Right cardiac atrium (tissue), 5 donors: ENCODE measurements at regions of chr16 and their contacts with region 1.

Region 1: GRCh38 chr16:7456211-7456610 is 123.6 kb downstream of the RBFOX1 start:
- DNase-seq: no peak
- ATAC-seq: no peak
- H3K4me3 ChIP-seq: no peak overlapping the region
- H3K27ac ChIP-seq: no peak overlapping the region
- H3K4me1 ChIP-seq: no peaks in the 10 kb centered on the region
- H3K27me3 ChIP-seq: no peaks in the 10 kb centered on the region

Region 2: DNA sequence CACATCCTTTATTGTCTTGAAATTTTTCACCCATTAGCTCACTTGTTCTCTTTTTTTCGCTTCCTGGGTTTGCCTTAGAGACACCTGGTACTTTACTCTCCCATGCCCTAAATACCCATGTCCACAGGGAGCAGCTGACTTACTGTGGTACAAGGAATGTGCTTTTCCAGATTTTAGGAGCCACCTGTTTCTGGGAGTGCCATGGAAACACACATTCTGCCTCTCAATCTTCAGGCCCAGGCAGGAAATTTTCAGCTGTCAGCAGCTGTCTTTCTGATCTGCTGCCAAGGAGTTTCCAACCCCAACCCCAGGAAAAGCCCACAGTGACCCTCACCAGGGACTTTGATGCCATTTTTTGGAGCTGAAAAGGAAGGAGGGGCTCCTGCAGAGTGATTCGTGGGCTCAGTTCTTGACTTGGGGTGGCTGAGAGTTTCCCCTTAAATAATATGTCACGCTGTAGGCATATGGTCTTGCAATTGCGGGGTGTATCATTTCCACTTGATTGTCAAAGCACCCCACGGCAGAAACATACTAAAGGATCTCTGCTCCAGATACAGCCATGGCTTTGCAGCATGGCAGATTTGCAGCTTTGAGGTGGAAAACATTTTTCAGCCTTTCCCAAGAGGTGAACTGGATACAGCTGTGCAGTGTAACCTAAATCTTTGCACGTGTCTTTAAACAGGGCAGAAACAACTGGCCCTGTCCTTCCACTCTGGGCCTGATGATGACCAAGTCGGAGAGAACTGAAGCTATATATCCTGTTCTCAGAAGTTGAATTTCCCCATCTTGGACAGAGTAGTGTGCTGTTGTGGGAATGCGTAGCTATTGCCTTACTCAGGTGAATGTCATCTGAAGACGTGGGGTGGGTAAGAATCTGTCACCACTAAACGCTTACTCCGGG is 104.4 kb before region 1 on chr16:
- intact Hi-C with region 1: no loop called
- DNase-seq: no peak
- ATAC-seq: no peak
- H3K4me3 ChIP-seq: no peak overlapping the region
- H3K27ac ChIP-seq: no peak overlapping the region
- H3K4me1 ChIP-seq: peaks cover 8% of the 10 kb centered on the region
- H3K27me3 ChIP-seq: no peaks in the 10 kb centered on the region

Region 3: GRCh38 chr16:7363422-7364417 is 92.5 kb before region 1 on chr16:
- intact Hi-C with region 1: no loop called
- DNase-seq: peak; percentile 33 to 64 (median 49)
- ATAC-seq: peak; percentile 33 to 38
- H3K4me3 ChIP-seq: no peak overlapping the region
- H3K27ac ChIP-seq: peak overlapping the region; percentile 70
- H3K4me1 ChIP-seq: peaks cover 5% of the 10 kb centered on the region
- H3K27me3 ChIP-seq: no peaks in the 10 kb centered on the region

Region 4: DNA sequence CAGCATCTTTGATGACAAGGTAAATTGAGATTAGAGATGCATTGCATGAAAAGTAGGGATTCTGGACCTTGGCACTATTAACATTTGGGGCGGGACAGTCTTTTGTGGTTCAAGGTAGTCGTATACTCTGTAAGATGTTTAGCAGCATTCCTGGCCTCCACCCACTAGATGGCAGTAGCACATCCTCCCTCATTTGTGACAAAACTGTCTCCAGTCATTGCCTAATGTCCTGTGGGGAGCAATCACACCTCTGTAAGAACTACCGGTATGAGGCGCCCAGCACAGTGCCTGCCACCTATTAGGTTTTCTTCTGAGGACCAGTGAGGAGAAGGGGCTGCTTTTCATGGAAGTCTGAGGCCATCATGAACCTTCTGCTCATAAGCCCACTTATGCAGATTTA is 57.2 kb after region 1 on chr16:
- intact Hi-C with region 1: loop called in 1 of 4 experiments (anchors 10 kb)
- DNase-seq: no peak
- ATAC-seq: no peak
- H3K4me3 ChIP-seq: no peak overlapping the region
- H3K27ac ChIP-seq: no peak overlapping the region
- H3K4me1 ChIP-seq: no peaks in the 10 kb centered on the region
- H3K27me3 ChIP-seq: no peaks in the 10 kb centered on the region

Region 5: DNA sequence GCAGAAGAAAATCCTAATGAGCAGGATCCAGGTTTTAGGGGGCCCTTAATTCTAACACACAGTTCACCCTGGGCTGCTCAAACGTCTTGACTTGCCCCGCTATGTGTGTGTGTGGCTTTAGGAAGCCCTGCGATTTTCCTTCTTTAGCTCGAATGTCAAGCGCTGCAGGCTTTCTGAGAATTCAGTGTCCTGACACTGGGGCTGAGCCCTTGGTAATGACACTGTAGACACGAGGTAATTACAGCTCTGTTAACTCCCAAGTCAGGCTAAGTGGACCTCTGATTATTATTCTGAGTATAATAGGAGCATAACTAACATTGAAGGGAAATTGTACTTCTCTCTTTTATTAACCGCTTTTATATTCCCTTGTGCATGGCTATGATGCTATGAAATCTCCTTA is 78.5 kb after region 1 on chr16:
- intact Hi-C with region 1: no loop called
- DNase-seq: no peak
- ATAC-seq: no peak
- H3K4me3 ChIP-seq: no peak overlapping the region
- H3K27ac ChIP-seq: no peak overlapping the region
- H3K4me1 ChIP-seq: no peaks in the 10 kb centered on the region
- H3K27me3 ChIP-seq: no peaks in the 10 kb centered on the region

Region 6: GRCh38 chr16:8026450-8026849 is 570.2 kb after region 1 on chr16:
- intact Hi-C with region 1: no loop called
- DNase-seq: no peak
- ATAC-seq: no peak
- H3K4me3 ChIP-seq: no peak overlapping the region
- H3K27ac ChIP-seq: no peak overlapping the region
- H3K4me1 ChIP-seq: no peaks in the 10 kb centered on the region
- H3K27me3 ChIP-seq: no peaks in the 10 kb centered on the region